H1 (cell line): ENCODE measurements at regions of chr12 and their contacts with region 1.

Region 1: GRCh38 chr12:1939801-1940607 is 21.6 kb upstream of the CACNA2D4 start:
- DNase-seq: peak; percentile 53 to 95
- H3K4me3 ChIP-seq: no peak overlapping the region
- H3K27ac ChIP-seq: no peak overlapping the region
- H3K4me1 ChIP-seq: no peaks in the 10 kb centered on the region; a peak in 1 of 7 replicates
- H3K27me3 ChIP-seq: no peaks in the 10 kb centered on the region
- CTCF ChIP-seq: peak; percentile 82 to 92 (median 85)
- EP300 ChIP-seq: no peak
- POLR2A ChIP-seq: no peak
- RAD21 ChIP-seq: peak; percentile 92 to 95

Region 2: DNA sequence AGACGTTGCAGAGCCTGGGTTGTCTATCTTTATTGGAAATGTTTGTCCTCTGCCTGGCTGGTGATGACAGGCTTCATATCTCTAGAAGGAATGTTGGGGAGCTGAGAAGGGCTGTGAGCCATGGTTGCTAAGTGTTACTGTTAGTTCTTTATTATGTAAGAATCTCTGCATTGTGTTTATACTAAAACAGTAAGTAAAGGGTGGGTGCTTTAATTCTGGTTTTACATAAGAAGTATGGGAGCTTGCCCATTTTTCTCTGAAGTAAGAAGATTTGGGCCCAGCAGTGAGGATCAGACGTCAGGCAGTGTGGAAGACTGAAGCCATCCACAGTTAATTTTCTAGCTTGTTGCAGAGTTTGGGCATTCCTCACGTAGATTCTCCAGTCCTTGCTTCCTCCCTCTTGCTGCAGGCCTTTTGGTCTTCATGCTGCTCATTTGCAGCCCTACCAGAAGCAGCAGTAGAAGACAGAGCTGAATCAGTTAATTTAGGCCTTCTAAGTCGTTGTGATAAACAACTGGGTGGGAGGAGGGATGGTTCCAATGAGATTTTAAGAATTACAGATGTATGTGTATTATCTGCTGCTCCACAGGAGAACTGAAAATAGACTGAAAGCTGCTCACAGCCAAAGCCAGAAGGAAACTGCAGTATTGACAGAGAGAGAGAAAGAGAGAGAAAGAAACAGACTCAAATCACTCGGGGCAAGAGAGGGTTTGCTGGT is 289.6 kb before region 1 on chr12:
- CTCF ChIA-PET with region 1: interaction called, 36 read pairs
- POLR2A ChIA-PET with region 1: no interaction called
- DNase-seq: no peak
- H3K4me3 ChIP-seq: no peak overlapping the region
- H3K27ac ChIP-seq: no peak overlapping the region
- H3K4me1 ChIP-seq: peaks cover 0 to 3% (median 0%) of the 10 kb centered on the region in 4 experiments; a peak in 2 of 7 replicates
- H3K27me3 ChIP-seq: peaks cover 0 to 1% (median 0%) of the 10 kb centered on the region in 4 experiments; a peak in 1 of 7 replicates
- CTCF ChIP-seq: no peak
- EP300 ChIP-seq: no peak
- POLR2A ChIP-seq: no peak
- RAD21 ChIP-seq: no peak

Region 3: GRCh38 chr12:1806301-1807086 is 133.5 kb before region 1 on chr12:
- CTCF ChIA-PET with region 1: interaction called, 188 read pairs
- POLR2A ChIA-PET with region 1: interaction called, 3 read pairs
- DNase-seq: no peak
- H3K4me3 ChIP-seq: no peak overlapping the region
- H3K27ac ChIP-seq: no peak overlapping the region
- H3K4me1 ChIP-seq: peaks cover 0 to 2% (median 0%) of the 10 kb centered on the region in 4 experiments; a peak in 1 of 7 replicates
- H3K27me3 ChIP-seq: no peaks in the 10 kb centered on the region
- CTCF ChIP-seq: no peak
- EP300 ChIP-seq: no peak
- POLR2A ChIP-seq: no peak
- RAD21 ChIP-seq: no peak

Region 4: GRCh38 chr12:1830981-1831963 is 108.7 kb before region 1 on chr12:
- CTCF ChIA-PET with region 1: interaction called, 20 read pairs
- POLR2A ChIA-PET with region 1: no interaction called
- DNase-seq: peak; percentile 59 to 89
- H3K4me3 ChIP-seq: peak overlapping the region in 3 of 4 experiments; percentile 9 to 49 (median 29); a peak in 6 of 8 replicates
- H3K27ac ChIP-seq: no peak overlapping the region
- H3K4me1 ChIP-seq: peaks cover 0 to 7% (median 6%) of the 10 kb centered on the region in 4 experiments; a peak in 5 of 7 replicates
- H3K27me3 ChIP-seq: peaks cover 0 to 5% (median 2%) of the 10 kb centered on the region in 4 experiments; a peak in 3 of 7 replicates
- CTCF ChIP-seq: no peak
- EP300 ChIP-seq: peak in 1 of 2 experiments; percentile 36; a peak in 1 of 3 replicates
- POLR2A ChIP-seq: no peak
- RAD21 ChIP-seq: no peak

Region 5: DNA sequence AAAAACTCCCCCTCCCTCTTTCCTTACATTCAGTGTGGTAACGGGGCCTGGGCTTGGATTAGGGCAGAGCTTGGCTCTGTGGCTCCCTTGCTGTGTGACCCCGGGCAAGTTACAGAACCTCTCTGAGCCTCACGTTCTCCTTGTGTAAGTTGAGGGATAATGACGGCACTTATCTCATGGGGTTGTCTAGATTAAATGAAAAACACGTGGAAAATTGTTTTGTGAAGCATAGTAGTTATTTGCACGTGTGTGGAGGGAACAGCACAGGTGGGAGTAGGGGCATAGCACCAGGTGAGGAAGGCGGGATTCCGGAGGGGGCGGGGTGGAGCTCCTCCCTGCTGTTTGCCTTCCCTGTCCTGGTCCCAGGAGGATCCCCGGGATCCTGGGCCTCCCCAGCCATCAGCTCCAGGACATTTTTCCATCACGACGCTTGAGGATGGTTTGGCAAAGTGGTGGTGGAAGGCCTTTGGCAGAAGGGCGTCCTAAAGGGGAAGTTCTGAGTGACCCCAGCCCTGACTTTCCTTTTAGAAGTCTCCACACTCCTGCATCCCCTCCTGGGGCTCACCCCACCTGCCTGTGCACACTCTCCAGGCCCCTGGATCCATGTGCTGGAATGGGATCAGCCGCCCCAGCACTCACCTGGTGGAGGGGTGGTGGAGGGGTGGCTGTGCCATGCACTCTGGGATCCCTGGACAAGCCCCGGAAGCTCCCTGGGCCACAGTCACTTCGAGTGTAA is 96.9 kb before region 1 on chr12:
- CTCF ChIA-PET with region 1: interaction called, 16 read pairs
- POLR2A ChIA-PET with region 1: no interaction called
- DNase-seq: peak in 1 of 2 experiments; percentile 45
- H3K4me3 ChIP-seq: no peak overlapping the region
- H3K27ac ChIP-seq: no peak overlapping the region
- H3K4me1 ChIP-seq: peaks cover 0 to 15% (median 6%) of the 10 kb centered on the region in 4 experiments; a peak in 5 of 7 replicates
- H3K27me3 ChIP-seq: no peaks in the 10 kb centered on the region
- CTCF ChIP-seq: no peak
- EP300 ChIP-seq: no peak
- POLR2A ChIP-seq: no peak
- RAD21 ChIP-seq: no peak

Region 6: GRCh38 chr12:1916371-1917171 is 23.4 kb before region 1 on chr12:
- CTCF ChIA-PET with region 1: interaction called, 32 read pairs
- POLR2A ChIA-PET with region 1: no interaction called
- DNase-seq: no peak
- H3K4me3 ChIP-seq: no peak overlapping the region
- H3K27ac ChIP-seq: no peak overlapping the region
- H3K4me1 ChIP-seq: peaks cover 0 to 11% (median 7%) of the 10 kb centered on the region in 4 experiments; a peak in 6 of 7 replicates
- H3K27me3 ChIP-seq: no peaks in the 10 kb centered on the region
- CTCF ChIP-seq: no peak
- EP300 ChIP-seq: no peak
- POLR2A ChIP-seq: no peak
- RAD21 ChIP-seq: no peak

Region 7: GRCh38 chr12:2034633-2035430 is 94.8 kb after region 1 on chr12:
- CTCF ChIA-PET with region 1: interaction called, 11 read pairs
- POLR2A ChIA-PET with region 1: no interaction called
- DNase-seq: peak; percentile 67 to 95
- H3K4me3 ChIP-seq: peak overlapping the region in 3 of 4 experiments; percentile 15 to 50 (median 27); a peak in 5 of 8 replicates
- H3K27ac ChIP-seq: no peak overlapping the region
- H3K4me1 ChIP-seq: peaks cover 0 to 3% (median 1%) of the 10 kb centered on the region in 4 experiments; a peak in 2 of 7 replicates
- H3K27me3 ChIP-seq: peaks cover 0 to 23% (median 16%) of the 10 kb centered on the region in 4 experiments; a peak in 6 of 7 replicates
- CTCF ChIP-seq: peak; percentile 85 to 89 (median 88)
- EP300 ChIP-seq: no peak
- POLR2A ChIP-seq: no peak
- RAD21 ChIP-seq: peak; percentile 67 to 80

Region 8: DNA sequence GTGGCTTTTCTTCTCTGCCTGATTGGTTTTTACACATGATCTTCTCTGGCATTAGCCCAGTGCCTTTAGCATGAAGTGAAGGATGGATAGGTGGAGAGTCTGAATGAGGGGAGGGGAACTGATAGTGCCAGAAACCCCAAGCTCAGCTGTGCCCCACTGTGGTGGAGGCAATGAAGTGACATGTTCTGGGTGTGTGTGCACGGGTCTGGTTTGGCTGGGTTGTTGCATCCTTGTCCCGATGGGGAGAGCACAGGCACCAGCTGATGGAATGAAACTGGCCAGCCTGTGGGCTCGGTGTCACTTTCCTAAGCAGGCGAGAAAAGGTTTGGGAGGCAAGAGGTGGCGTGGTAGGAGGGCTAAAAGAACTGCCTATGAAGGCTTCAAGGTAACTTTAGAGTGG is 178.1 kb after region 1 on chr12:
- CTCF ChIA-PET with region 1: no interaction called
- POLR2A ChIA-PET with region 1: no interaction called
- DNase-seq: no peak
- H3K4me3 ChIP-seq: no peak overlapping the region
- H3K27ac ChIP-seq: no peak overlapping the region
- H3K4me1 ChIP-seq: peaks cover 0 to 4% (median 0%) of the 10 kb centered on the region in 4 experiments; a peak in 1 of 7 replicates
- H3K27me3 ChIP-seq: no peaks in the 10 kb centered on the region
- CTCF ChIP-seq: peak; percentile 25 to 49 (median 35); a peak in 3 of 4 replicates
- EP300 ChIP-seq: no peak
- POLR2A ChIP-seq: no peak
- RAD21 ChIP-seq: peak; percentile 30 to 47; a peak in 3 of 4 replicates